Activated naive CD4-positive, alpha-beta T cell treated with anti-CD3 and anti-CD28 coated beads, Interleukin-2, amount 10 ng/mL, durations not matched to agents 7 days and 5 days (primary cell): ENCODE measurements at regions of chr16 and their contacts with region 1.

Region 1: DNA sequence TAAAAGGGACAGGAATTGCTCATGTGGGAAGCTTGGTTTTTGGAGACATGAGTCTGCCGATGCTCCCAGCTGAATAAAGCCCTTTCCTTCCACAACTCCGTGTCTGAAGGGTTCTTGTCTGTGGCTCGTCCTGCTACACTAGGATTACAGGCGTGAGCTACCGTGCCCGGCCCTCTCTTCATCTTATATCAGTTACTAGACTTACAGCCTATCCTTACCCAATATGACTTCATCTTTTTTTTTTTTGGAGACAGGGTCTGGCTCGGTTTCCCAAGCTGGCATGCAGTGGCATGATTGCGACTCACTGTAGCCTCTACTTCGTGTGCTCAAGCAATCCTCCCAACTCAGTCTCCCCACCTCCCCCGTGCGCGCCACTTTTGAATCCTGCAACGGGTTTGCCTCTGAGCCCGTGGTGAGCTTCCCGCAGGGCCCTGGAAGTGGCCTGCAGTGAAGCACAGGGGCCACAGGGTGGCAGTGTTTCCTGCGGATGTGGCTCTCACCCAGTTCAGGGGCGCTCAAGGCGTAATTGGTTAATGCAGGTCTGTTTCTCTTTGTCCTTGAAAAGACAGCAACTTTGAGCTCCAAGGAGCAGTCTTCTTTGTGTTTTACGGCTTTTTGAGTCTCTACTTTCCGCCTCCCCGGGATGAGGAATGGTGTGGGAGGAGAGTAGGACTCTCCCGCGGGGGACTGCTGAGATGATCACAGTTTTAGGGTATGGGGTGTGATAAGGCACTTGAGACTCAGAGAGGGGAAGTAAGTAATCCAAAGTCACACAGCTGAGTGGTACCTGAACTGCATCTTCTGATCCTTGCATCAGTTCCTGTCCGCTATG is 22.7 kb upstream of the GPRC5B start:
- DNase-seq: peak; percentile 81
- H3K4me3 Mint-ChIP-seq: no peak overlapping the region
- H3K27ac Mint-ChIP-seq: no peak overlapping the region
- H3K4me1 Mint-ChIP-seq: peaks cover 8% of the 10 kb centered on the region
- H3K27me3 Mint-ChIP-seq: peaks cover 37% of the 10 kb centered on the region

Region 2: GRCh38 chr16:20271893-20272292 is 364.5 kb after region 1 on chr16:
- CTCF ChIA-PET with region 1: no interaction called
- DNase-seq: no peak
- H3K4me3 Mint-ChIP-seq: no peak overlapping the region
- H3K27ac Mint-ChIP-seq: no peak overlapping the region
- H3K4me1 Mint-ChIP-seq: no peaks in the 10 kb centered on the region
- H3K27me3 Mint-ChIP-seq: no peaks in the 10 kb centered on the region

Region 3: DNA sequence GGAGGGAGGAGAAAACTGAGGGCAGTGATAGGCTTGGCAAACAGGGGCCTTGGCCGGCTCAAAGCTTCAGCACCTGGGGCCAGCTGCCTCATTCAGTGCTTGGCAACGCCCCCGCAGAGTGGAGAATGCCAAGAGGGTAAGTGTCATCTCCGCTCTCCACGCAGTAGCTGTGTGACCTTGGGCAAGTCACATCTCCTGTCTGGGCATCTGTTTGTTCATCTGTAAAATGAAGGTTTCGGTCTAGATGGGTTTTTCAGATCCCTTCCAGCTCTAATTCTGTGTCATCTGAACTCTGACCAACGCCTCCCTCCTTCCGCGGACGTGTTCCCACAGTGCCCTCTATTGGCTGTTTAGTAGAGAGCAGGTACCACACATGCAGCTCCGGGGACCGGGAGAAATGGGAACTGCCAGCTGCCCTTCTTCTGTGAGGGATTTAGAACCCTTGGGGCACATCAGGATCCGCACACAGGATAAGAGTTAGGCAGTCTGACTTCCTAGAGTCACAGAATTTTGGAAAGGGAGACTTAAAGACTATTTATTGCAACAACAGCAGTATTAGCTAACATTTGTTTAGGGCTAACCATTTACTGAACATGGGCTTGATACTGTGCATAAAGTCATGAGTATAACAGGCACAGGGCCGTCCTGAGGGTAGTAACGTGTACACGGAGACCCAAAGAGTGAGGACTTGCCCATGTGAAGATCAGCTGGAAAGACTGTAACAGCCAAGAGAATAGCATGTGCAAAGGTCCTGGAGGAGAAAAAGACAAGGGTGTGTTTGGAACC is 393.1 kb after region 1 on chr16:
- CTCF ChIA-PET with region 1: interaction called, 73 read pairs
- DNase-seq: peak; percentile 46
- H3K4me3 Mint-ChIP-seq: no peak overlapping the region
- H3K27ac Mint-ChIP-seq: no peak overlapping the region
- H3K4me1 Mint-ChIP-seq: no peaks in the 10 kb centered on the region
- H3K27me3 Mint-ChIP-seq: peaks cover 5% of the 10 kb centered on the region

Region 4: DNA sequence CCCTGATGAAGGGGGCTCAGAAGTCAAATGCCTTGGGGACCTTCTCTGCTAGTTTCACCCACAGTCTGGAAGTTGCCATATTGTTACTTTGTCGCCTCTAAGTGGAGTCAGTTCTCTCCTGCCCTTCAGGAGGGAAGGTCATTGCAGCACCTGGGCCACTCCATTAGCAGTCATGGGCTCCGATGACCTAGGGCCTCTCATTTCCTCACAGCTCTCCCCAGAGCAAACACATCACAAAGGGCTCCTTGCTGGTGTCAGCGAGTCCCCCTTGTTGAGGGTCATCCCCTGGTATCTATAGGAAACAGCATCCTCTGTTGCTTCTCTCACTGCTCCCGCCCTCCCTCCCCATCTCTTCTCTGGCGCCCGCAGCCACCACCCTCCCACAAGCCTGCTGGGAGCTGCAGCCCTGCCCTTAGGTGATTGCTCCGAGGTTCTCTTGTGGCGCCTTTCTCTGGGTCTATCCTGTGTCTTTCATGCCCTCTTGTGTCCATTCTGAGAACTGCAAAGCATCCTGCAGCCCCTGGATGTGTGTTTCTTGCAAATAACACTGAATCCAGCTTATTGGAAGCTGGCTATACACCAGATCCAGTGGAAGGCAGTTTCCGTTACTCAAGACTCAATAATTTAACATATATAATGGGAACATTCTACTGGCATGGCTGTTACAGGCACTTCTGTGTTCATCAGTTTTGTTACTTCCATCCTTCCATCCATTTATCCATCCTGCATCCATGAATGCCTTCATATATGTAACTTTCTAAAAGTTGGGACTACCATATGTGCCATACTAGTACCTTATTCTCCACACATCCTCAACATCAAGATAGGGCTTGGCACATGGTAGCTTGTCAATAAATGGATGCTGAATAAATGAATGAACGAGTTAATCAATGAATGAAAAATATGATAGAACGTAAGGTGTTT is 476.0 kb after region 1 on chr16:
- CTCF ChIA-PET with region 1: interaction called, 65 read pairs
- DNase-seq: peak; percentile 58
- H3K4me3 Mint-ChIP-seq: no peak overlapping the region
- H3K27ac Mint-ChIP-seq: no peak overlapping the region
- H3K4me1 Mint-ChIP-seq: no peaks in the 10 kb centered on the region
- H3K27me3 Mint-ChIP-seq: peaks cover 6% of the 10 kb centered on the region